ENCODE measurements at regions of chr6 and their contacts with region 1.

Region 1: DNA sequence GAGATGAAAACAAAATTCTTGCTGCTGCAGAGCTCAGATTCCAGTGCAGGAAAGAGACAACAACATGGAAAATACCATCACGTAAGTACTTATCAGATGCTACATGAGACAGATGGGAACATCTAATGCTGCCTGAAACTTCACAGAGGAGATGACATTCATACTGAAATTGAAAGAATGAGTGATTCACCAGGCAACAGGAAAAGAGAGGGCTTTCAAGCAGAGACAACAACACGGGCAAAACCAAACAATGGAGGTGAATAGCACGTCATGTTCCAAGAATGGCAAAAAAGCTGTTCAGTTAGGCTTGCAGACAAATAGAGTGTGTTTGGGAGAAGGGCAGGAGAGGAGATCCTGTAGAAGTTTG is 39.3 kb downstream of the GTF2H5 start:
- DNase-seq: peak; percentile 80
- H3K4me3 ChIP-seq: no peak overlapping the region
- H3K27ac ChIP-seq: peak overlapping the region; percentile 35
- H3K4me1 ChIP-seq: peaks cover 23% of the 10 kb centered on the region
- H3K27me3 ChIP-seq: no peaks in the 10 kb centered on the region
- CTCF ChIP-seq: no peak

Region 2: DNA sequence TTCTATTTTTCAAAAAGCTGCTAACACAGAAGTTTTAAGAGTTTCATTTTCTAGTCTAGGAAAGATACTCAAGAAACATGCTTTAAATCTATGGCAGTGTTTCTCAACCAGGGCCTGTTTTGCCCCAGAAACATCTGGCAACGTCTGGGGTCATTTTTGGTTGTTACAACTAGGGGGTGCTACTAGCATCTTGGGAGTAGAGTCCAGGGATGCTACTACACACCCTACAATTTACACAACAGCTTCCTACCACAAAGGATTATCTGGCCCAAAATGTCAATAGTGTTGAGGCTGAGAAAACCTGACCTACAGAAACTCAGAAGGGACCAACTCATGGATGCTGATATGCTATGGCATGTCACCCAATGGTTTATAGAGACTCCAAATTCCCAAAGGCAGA is 63.7 kb before region 1 on chr6:
- CTCF ChIA-PET with region 1: no interaction called
- dilution Hi-C with region 1: loop called (anchors 5 kb)
- in situ Hi-C with region 1: no loop called
- intact Hi-C with region 1: loop called (anchors 2 kb)
- DNase-seq: peak; percentile 19
- H3K4me3 ChIP-seq: no peak overlapping the region
- H3K27ac ChIP-seq: no peak overlapping the region
- H3K4me1 ChIP-seq: no peaks in the 10 kb centered on the region
- H3K27me3 ChIP-seq: no peaks in the 10 kb centered on the region
- CTCF ChIP-seq: peak; percentile 30 to 48

Region 3: GRCh38 chr6:158149641-158150040 is 57.8 kb before region 1 on chr6:
- CTCF ChIA-PET with region 1: no interaction called
- dilution Hi-C with region 1: loop called (anchors 5 kb)
- in situ Hi-C with region 1: no loop called
- intact Hi-C with region 1: no loop called
- DNase-seq: peak; percentile 61
- H3K4me3 ChIP-seq: no peak overlapping the region
- H3K27ac ChIP-seq: no peak overlapping the region
- H3K4me1 ChIP-seq: peaks cover 4% of the 10 kb centered on the region
- H3K27me3 ChIP-seq: no peaks in the 10 kb centered on the region
- CTCF ChIP-seq: no peak

Region 4: DNA sequence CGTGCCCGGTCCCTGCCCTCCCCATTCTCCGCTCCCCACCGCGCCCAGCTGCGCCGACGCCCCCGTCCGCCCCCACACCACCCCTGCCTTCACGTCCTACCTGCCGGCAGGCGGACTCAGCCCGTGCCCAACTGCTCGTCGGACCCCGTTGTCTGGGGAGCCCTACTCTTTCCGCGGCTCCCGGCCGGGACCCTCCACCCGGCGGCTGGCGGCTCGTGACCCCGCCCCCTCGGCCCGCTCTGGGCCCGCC is 39.4 kb before region 1 on chr6 and contains the start of gene SERAC1:
- CTCF ChIA-PET with region 1: no interaction called
- dilution Hi-C with region 1: no loop called
- in situ Hi-C with region 1: no loop called
- intact Hi-C with region 1: no loop called
- DNase-seq: no peak
- H3K4me3 ChIP-seq: peak within 1 kb of the TSS; percentile 94 to 100 (median 97)
- H3K27ac ChIP-seq: peak within 1 kb of the TSS; percentile 86
- H3K4me1 ChIP-seq: peaks cover 25% of the 10 kb centered on the region
- H3K27me3 ChIP-seq: no peaks in the 10 kb centered on the region
- CTCF ChIP-seq: no peak
- total RNA-seq, gene SERAC1: 10.0 to 24.2 TPM

Measured in mammary epithelial cell (primary cell).